ENCODE measurements at regions of chr17 and their contacts with region 1.

Region 1: DNA sequence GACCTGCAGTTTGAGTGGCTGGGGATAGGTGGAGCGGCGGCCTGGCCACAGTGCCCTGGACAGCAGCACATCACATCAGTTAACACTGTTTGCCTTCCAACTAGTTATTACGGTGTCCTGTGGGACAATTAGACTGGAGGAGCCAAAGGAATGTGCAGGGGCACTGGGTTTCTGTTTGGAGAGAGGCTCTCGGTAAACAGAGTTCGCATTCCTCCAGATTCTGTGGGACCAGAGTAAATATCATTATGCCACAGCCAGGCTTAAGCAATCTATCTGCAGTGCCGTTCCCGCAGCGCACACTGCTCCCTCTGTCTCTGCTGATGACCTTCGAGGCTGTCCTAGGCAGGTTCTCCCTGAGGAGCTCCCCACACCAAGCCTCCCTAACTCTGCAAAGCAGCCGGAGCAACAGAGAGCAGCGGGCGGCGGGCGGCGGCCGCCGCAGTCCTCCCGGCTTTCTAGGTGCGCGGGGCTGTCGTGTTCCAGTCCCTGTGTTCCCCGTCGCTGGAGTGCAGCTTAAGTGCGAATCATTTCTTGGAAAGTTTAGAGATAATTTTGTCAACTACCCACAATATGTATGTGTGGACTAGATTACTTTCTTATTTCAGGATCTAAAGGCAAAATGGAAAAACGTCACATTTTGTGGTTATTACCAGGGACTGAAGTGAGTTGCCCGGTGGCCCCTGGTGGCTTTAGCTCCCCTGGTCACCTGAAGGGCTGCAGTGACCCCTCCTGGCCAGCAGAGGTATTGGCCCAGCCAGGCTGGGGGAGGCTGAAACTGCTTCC is 43.2 kb downstream of the PGS1 start:
- DNase-seq: peak; percentile 98
- H3K4me3 ChIP-seq: no peak overlapping the region; a peak in 1 of 4 replicates
- H3K27ac ChIP-seq: no peak overlapping the region
- H3K4me1 ChIP-seq: no peaks in the 10 kb centered on the region
- H3K27me3 ChIP-seq: no peaks in the 10 kb centered on the region
- CTCF ChIP-seq: peak; percentile 100
- EP300 ChIP-seq: no peak
- RAD21 ChIP-seq: peak; percentile 99

Region 2: DNA sequence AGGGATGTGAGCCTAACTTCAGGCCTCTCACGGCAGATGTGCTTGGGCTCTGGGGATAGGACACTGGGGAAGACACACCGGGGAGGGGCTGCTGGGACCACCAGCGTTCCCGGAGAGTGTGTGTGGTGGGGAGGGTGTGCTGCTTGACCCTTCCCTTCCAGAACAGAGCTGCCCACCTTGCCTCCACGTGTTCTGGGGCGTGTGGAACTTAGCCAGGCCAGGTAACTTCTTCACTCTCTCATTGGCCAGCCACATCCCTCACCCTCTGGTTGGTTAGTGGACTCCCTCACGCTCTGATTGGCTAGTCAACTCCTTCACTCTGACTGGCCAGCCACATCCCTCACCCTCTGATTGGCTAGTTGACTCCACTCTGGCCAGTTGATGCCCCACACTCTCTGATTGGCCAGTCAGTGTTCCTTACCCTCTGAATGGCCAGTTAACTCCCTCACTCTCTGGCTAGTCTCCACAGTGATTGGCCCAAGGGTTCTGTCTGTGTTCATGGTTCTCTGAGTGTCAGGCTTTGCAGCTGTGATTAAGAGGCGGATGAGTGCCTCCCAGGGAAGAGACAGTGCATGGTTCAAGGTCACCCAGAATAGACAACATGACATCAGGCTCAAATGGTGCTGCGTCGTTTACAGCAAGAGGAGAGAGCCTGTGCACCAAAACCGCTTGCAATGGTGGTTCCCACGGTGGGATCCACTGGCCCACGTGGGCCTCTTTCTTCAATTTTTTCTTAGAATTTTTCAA is 180.2 kb before region 1 on chr17:
- CTCF ChIA-PET with region 1: interaction called, 10 read pairs
- POLR2A ChIA-PET with region 1: no interaction called
- DNase-seq: peak; percentile 79
- H3K4me3 ChIP-seq: no peak overlapping the region
- H3K27ac ChIP-seq: no peak overlapping the region; a peak in 1 of 4 replicates
- H3K4me1 ChIP-seq: peaks cover 0 to 26% of the 10 kb centered on the region in 2 experiments; a peak in 1 of 4 replicates
- H3K27me3 ChIP-seq: no peaks in the 10 kb centered on the region
- CTCF ChIP-seq: no peak
- EP300 ChIP-seq: no peak
- RAD21 ChIP-seq: no peak

Region 3: DNA sequence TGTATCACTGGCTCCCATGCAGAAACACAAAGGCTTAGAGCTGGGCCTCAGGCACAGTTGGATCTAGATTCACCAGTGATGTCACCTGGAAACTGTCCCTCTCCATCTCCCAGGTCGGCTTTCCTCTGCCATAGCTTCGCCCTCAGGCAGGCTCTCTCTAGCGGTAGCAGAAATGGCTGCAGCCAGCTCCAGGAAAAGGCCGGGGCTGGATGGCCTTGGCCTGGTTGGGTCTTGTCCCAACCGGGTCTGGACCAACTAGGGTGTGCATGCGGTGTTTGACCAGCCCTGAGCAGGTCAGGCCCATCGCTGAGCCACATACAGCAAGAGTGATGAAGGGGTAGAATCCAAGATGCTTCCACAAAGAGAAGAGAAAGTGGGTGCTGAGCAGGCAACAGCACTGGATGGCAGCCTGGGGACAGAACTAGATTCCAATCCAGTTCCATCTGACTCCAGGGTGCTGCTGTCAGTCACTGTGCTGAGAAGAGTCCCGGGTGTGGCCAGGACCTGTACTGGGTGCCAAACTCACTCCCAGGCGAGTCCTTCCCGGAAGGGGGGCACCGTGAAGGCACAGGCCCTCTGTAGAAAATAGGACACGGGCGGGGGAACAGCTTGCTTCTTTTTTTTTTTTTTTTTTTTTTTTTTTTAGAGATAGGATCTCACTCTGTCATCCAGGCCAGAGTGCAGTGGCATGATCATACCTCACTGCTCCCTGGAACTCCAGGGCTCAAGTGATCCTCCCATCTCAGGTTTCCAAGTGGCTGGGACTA is 113.6 kb before region 1 on chr17:
- CTCF ChIA-PET with region 1: interaction called, 19 read pairs
- POLR2A ChIA-PET with region 1: no interaction called
- DNase-seq: peak; percentile 51
- H3K4me3 ChIP-seq: no peak overlapping the region
- H3K27ac ChIP-seq: no peak overlapping the region
- H3K4me1 ChIP-seq: peaks cover 0 to 7% of the 10 kb centered on the region in 2 experiments; a peak in 1 of 4 replicates
- H3K27me3 ChIP-seq: no peaks in the 10 kb centered on the region
- CTCF ChIP-seq: no peak; the same call in 1 of the 2 replicates
- EP300 ChIP-seq: no peak
- RAD21 ChIP-seq: no peak

Region 4: GRCh38 chr17:78360371-78361224 is 61.1 kb before region 1 on chr17:
- CTCF ChIA-PET with region 1: interaction called, 327 read pairs
- POLR2A ChIA-PET with region 1: interaction called, 6 read pairs
- DNase-seq: peak; percentile 97
- H3K4me3 ChIP-seq: peak overlapping the region; percentile 70 to 94
- H3K27ac ChIP-seq: peak overlapping the region; percentile 91
- H3K4me1 ChIP-seq: peaks cover 18 to 43% of the 10 kb centered on the region in 2 experiments
- H3K27me3 ChIP-seq: no peaks in the 10 kb centered on the region
- CTCF ChIP-seq: peak; percentile 99
- EP300 ChIP-seq: peak in 1 of 2 experiments; percentile 6; a peak in 1 of 4 replicates
- RAD21 ChIP-seq: peak; percentile 81

Region 5: DNA sequence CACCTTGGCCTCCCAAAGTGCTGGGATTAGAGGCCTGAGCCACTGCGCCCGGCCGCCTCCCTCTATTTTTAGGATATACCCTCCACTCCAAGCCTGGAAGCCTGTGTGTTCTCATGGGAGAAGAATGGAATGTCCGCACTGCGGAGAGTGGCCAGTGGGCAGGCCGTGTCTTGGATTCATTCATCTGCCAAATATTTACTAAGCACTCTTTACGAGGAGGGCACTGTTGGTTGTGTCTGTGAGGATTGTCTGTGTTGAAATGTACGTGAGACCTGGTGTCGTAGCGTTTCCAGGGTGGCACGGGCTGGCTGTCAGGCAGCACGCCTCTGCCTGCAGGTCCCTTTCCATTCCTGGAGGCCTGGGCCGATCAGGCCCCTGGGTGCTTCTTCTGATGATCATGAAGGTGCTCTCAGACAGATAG is 24.0 kb before region 1 on chr17:
- CTCF ChIA-PET with region 1: interaction called, 32 read pairs
- POLR2A ChIA-PET with region 1: interaction called, 3 read pairs
- DNase-seq: no peak
- H3K4me3 ChIP-seq: no peak overlapping the region
- H3K27ac ChIP-seq: no peak overlapping the region
- H3K4me1 ChIP-seq: peaks cover 0 to 3% of the 10 kb centered on the region in 2 experiments; a peak in 1 of 4 replicates
- H3K27me3 ChIP-seq: no peaks in the 10 kb centered on the region
- CTCF ChIP-seq: no peak
- EP300 ChIP-seq: no peak
- RAD21 ChIP-seq: no peak

Region 6: GRCh38 chr17:78510141-78511075 is 88.7 kb after region 1 on chr17:
- CTCF ChIA-PET with region 1: no interaction called
- POLR2A ChIA-PET with region 1: no interaction called
- DNase-seq: no peak
- H3K4me3 ChIP-seq: no peak overlapping the region
- H3K27ac ChIP-seq: no peak overlapping the region
- H3K4me1 ChIP-seq: no peaks in the 10 kb centered on the region; a peak in 1 of 4 replicates
- H3K27me3 ChIP-seq: 0 out of 2 replicates have a peak, but pooled peaks cover 6% of the 10 kb centered on the region
- CTCF ChIP-seq: no peak
- EP300 ChIP-seq: no peak
- RAD21 ChIP-seq: no peak

Region 7: DNA sequence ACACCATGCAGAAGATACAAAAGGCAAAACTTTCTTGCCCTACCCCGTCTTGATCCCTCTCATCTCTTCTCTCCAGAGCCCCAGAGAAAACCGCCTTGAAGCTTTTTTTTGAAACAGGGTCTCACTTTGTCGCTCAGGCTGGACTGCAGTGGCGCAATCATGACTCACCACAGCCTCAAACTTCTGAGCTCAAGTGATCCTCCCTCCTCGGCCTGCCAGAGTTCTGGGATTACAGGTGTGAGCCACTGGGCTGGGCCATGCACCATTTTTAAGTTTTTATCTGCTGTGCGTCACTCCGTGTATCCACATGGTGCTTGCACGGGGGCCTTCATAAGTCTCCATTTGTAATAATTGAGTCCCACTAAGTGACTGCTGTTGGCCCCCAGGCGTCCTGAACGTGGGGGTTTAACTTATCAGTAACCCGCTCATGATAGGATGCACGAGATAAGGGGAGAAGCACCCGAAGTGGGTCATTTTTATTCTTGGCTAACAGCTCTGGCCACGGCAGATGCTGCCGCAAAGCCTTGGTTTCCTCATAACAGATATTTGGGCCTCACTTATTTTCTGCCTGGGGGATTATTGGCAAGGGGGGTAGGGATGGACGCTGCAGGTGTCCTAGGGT is 146.9 kb after region 1 on chr17:
- CTCF ChIA-PET with region 1: no interaction called
- POLR2A ChIA-PET with region 1: no interaction called
- DNase-seq: peak; percentile 75
- H3K4me3 ChIP-seq: no peak overlapping the region
- H3K27ac ChIP-seq: no peak overlapping the region
- H3K4me1 ChIP-seq: peaks cover 0 to 6% of the 10 kb centered on the region in 2 experiments; a peak in 1 of 4 replicates
- H3K27me3 ChIP-seq: no peaks in the 10 kb centered on the region
- CTCF ChIP-seq: no peak
- EP300 ChIP-seq: no peak
- RAD21 ChIP-seq: no peak

Region 8: DNA sequence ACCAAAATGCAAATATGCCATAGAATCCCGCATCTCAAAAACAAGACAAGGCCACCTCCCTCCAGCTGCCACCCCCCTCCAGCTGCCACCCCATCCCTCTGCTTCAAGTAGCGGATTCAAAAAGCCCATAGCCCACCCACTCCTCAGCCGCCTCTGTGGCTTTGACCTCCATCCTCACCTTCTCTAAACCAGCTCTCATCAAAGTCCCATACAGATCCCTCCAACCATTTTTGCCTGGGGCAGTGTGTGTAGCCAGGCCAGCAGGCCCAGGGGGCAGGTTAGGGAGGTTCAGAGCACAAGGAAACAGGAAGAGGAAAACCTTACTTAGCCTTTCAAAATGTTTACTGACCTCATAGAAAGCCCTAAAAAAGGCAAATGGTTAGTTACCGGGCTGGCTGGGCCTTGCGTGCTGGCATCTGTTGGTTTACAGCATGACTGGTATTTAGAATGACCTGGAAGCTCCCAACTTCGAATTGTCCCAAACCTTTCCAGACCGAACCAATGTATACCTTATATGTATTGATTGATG is 175.6 kb after region 1 on chr17:
- CTCF ChIA-PET with region 1: no interaction called
- POLR2A ChIA-PET with region 1: no interaction called
- DNase-seq: no peak
- H3K4me3 ChIP-seq: no peak overlapping the region
- H3K27ac ChIP-seq: no peak overlapping the region
- H3K4me1 ChIP-seq: peaks cover 3 to 18% of the 10 kb centered on the region in 2 experiments
- H3K27me3 ChIP-seq: no peaks in the 10 kb centered on the region
- CTCF ChIP-seq: no peak
- EP300 ChIP-seq: no peak
- RAD21 ChIP-seq: no peak

Region 9: DNA sequence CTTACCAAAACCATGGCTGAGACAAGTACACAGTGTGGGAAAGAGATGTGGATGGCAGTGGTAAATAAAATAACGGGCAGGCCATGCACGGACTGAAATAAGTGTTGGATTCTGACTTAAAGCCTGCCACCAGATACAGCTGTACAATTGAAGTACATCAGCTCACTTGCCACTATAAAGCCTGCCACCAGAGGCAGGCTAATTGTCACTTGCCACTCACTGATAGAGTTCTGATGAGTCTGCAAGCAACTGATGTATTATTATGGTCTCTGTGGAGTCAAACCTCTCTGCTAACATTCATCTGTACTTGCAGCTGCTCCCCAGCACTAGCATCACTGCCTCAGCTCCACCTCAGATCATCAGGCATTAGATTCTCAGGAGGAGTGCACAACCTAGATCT is 267.4 kb after region 1 on chr17:
- CTCF ChIA-PET with region 1: no interaction called
- POLR2A ChIA-PET with region 1: no interaction called
- DNase-seq: no peak
- H3K4me3 ChIP-seq: no peak overlapping the region
- H3K27ac ChIP-seq: no peak overlapping the region
- H3K4me1 ChIP-seq: no peaks in the 10 kb centered on the region
- H3K27me3 ChIP-seq: no peaks in the 10 kb centered on the region
- CTCF ChIP-seq: no peak; the same call in 1 of the 2 replicates
- EP300 ChIP-seq: no peak
- RAD21 ChIP-seq: no peak

Region 10: GRCh38 chr17:78708510-78708973 is 286.9 kb after region 1 on chr17:
- CTCF ChIA-PET with region 1: interaction called, 12 read pairs
- POLR2A ChIA-PET with region 1: no interaction called
- DNase-seq: peak; percentile 86
- H3K4me3 ChIP-seq: no peak overlapping the region
- H3K27ac ChIP-seq: peak overlapping the region in 1 of 2 experiments; percentile 83; a peak in 2 of 4 replicates
- H3K4me1 ChIP-seq: peaks cover 9 to 66% of the 10 kb centered on the region in 2 experiments
- H3K27me3 ChIP-seq: no peaks in the 10 kb centered on the region
- CTCF ChIP-seq: peak; percentile 99
- EP300 ChIP-seq: no peak
- RAD21 ChIP-seq: peak; percentile 100

Measured in SK-N-SH (cell line).